HEK293T (cell line): ENCODE measurements at regions of chr3 and their contacts with region 1.

Region 1: GRCh38 chr3:141178551-141178950 is 53.1 kb upstream of the PXYLP1 start:
- DNase-seq: no peak

Region 2: GRCh38 chr3:140922634-140923033 is 255.9 kb before region 1 on chr3:
- CTCF ChIA-PET with region 1: no interaction called
- POLR2A ChIA-PET with region 1: no interaction called
- DNase-seq: no peak

Region 3: GRCh38 chr3:141030296-141030695 is 148.3 kb before region 1 on chr3:
- CTCF ChIA-PET with region 1: interaction called, 10 read pairs
- POLR2A ChIA-PET with region 1: no interaction called
- DNase-seq: no peak

Region 4: GRCh38 chr3:141266797-141267555 is 88.4 kb after region 1 on chr3:
- CTCF ChIA-PET with region 1: no interaction called
- POLR2A ChIA-PET with region 1: no interaction called
- DNase-seq: no peak